ENCODE measurements at regions of chr3 and their contacts with region 1.

Region 1: GRCh38 chr3:50260027-50260941 is 8.7 kb upstream of the SEMA3B start:
- DNase-seq: peak; percentile 78 to 88
- ATAC-seq: peak; percentile 91 to 93
- H3K4me3 ChIP-seq: peak overlapping the region; percentile 72 to 94 (median 81)
- H3K27ac ChIP-seq: peak overlapping the region; percentile 96 to 99 (median 98)
- H3K4me1 ChIP-seq: peaks cover 31 to 39% of the 10 kb centered on the region in 2 donors
- H3K27me3 ChIP-seq: no peaks in the 10 kb centered on the region
- CTCF ChIP-seq: peak; percentile 89 to 100 (median 100)
- POLR2A ChIP-seq: peak; percentile 57 to 70

Region 2: DNA sequence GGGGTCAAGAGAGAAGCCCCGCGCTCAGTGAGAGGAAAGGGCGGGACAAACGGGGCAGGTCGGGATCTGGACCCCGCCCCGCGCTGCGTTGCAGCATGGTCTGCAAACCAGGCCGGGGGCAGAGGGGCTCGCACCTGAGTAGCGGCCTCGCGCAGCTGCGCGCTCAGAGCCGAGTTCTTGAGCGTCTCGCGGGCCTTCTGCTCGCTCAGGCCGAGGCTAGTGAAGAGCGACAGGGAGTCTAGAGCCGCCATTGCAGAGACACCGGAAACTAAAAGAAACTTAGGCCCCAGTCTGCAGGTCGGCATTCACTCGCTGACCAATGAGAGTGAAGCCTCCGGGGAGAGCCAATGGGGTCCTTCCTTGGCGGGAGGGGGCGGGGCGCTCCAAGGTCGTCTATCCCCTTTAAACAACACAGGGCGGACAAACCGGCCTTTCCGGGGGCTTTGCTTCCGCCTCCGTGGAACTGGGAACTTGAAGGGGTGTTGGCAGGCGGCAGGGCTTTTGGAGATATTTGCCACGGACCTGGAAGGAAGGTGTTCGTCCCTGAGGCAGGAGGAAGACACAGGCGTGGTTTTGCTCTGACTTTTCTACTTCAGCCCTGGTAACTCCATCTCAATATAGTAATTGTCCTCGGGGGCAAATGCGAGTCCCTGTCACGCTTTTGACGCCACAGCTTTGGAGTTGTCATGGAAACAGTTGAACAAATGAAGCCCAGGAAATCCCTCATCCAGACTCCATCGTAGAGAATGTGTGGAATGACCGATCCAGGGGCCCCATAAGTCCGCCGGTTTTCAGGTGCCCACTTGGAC is 1155.6 kb before region 1 on chr3 and contains the start of gene QARS1:
- in situ Hi-C with region 1: no loop called
- intact Hi-C with region 1: no loop called
- DNase-seq: peak; percentile 93 to 95
- ATAC-seq: peak; percentile 98 to 99
- H3K4me3 ChIP-seq: peak within 1 kb of the TSS; percentile 82 to 94 (median 91)
- H3K27ac ChIP-seq: peak within 1 kb of the TSS; percentile 75 to 91 (median 86)
- H3K4me1 ChIP-seq: peaks cover 19 to 26% of the 10 kb centered on the region in 2 donors
- H3K27me3 ChIP-seq: no peaks in the 10 kb centered on the region
- CTCF ChIP-seq: no peak
- POLR2A ChIP-seq: peak; percentile 52 to 81
- total RNA-seq, gene QARS1: 157 to 259 (median 173) TPM

Region 3: GRCh38 chr3:50272911-50273693 is 12.8 kb after region 1 on chr3:
- in situ Hi-C with region 1: no loop called
- intact Hi-C with region 1: loop called (anchors 1 kb)
- DNase-seq: peak; percentile 68 to 80
- ATAC-seq: peak; percentile 82 to 85
- H3K4me3 ChIP-seq: peak overlapping the region; percentile 38 to 56 (median 51)
- H3K27ac ChIP-seq: peak overlapping the region in 2 of 4 donors; percentile 8 to 15
- H3K4me1 ChIP-seq: peaks cover 17 to 38% of the 10 kb centered on the region in 2 donors
- H3K27me3 ChIP-seq: no peaks in the 10 kb centered on the region
- CTCF ChIP-seq: peak; percentile 97 to 99 (median 99)
- POLR2A ChIP-seq: peak in 1 of 2 donors; percentile 11

Measured in gastrocnemius medialis (tissue), 4 donors.